SK-N-SH (cell line): ENCODE measurements at regions of chr19 and their contacts with region 1.

Region 1: DNA sequence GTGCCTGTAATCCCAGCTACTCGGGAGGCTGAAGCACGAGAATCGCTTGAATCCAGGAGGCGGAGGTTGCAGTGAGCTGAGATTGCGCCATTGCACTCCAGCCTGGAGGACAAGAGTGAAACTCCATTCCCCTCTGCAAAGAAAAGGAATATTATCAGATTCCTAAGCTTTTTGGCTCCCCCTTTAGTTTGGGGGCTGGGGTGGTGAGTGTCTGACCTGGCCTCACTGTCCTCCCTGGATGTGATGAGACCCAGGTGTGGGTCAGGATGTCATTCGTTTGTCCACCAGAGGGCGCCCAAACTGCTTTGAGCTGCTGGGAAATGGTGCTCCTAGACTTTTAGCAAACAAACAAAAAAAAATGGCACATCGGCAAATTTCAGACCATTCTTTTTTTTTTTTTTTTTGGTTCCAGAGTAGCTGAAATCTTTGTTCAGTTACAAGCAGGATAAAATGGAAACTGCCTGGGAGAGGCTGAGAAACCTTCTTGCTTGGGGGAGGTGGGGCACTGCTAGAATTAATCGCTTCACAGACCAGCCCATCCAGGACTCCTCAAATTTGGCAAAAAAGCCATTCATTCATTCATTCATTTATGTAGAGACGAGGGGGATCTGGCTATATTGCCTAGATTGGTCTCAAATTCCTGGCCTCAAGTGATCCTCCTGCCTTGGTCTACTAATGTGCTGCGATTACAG is 29.4 kb downstream of the SPC24 start:
- DNase-seq: peak; percentile 82
- H3K4me3 ChIP-seq: no peak overlapping the region; a peak in 1 of 4 replicates
- H3K27ac ChIP-seq: no peak overlapping the region
- H3K4me1 ChIP-seq: no peaks in the 10 kb centered on the region
- H3K27me3 ChIP-seq: no peaks in the 10 kb centered on the region
- CTCF ChIP-seq: peak; percentile 90
- EP300 ChIP-seq: no peak
- RAD21 ChIP-seq: peak; percentile 67

Region 2: GRCh38 chr19:10936661-10937084 is 189.5 kb before region 1 on chr19:
- CTCF ChIA-PET with region 1: interaction called, 20 read pairs
- POLR2A ChIA-PET with region 1: no interaction called
- DNase-seq: peak; percentile 83
- H3K4me3 ChIP-seq: peak overlapping the region in 1 of 2 experiments; percentile 40; a peak in 1 of 4 replicates
- H3K27ac ChIP-seq: peak overlapping the region in 1 of 2 experiments; percentile 51; a peak in 1 of 4 replicates
- H3K4me1 ChIP-seq: peaks cover 0 to 8% of the 10 kb centered on the region in 2 experiments; a peak in 2 of 4 replicates
- H3K27me3 ChIP-seq: no peaks in the 10 kb centered on the region
- CTCF ChIP-seq: peak; percentile 75
- EP300 ChIP-seq: no peak
- RAD21 ChIP-seq: peak; percentile 82

Region 3: DNA sequence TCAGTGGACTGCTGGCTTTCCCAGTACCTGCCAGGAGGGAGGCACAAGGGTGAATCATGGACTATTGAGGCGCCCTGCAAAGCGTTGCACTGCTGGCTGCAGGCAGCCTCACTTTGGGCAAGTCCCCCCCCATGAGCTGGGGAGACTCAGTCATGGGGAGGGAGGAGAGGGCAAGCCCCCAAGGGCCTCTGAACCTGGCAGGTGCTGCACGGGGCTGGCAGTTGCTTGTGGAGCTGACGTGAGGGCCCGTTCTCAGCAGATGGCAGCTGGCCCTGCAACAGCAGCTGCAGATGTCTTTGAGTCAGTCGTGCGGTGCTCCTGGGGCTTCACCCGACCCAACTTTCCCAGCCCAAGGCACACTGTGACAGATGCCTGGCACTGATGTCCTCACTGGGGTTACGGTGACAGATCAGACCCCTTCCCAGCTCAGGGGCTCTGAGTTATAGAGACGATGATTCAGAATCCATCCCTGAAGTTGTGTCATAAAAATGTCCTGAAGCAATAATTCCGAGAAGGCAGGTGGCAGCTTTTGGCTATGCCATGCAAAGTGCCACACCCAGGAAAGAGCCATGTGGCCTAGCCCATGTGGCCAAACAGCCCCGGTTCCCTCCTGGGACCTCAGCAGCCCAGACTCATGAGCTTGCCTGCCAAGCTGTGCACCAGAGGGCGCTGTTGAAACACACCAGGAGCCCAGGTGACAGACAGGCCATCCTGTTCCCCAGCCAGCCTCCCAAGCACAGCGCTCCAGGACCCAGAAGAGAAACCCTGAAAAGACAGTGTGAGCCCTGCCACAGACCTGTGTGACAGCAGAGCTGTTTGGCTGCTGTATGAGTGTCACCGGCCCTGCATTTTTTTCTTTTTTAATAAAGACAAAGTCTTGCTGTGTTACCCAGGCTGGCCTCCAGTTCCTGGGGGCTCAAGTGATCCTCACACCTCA is 90.4 kb before region 1 on chr19:
- CTCF ChIA-PET with region 1: interaction called, 20 read pairs
- POLR2A ChIA-PET with region 1: interaction called, 3 read pairs
- DNase-seq: peak; percentile 92
- H3K4me3 ChIP-seq: peak overlapping the region in 1 of 2 experiments; percentile 14; a peak in 1 of 4 replicates
- H3K27ac ChIP-seq: no peak overlapping the region
- H3K4me1 ChIP-seq: no peaks in the 10 kb centered on the region
- H3K27me3 ChIP-seq: no peaks in the 10 kb centered on the region
- CTCF ChIP-seq: peak; percentile 81
- EP300 ChIP-seq: no peak
- RAD21 ChIP-seq: peak; percentile 80

Region 4: GRCh38 chr19:11090054-11090900 is 35.9 kb before region 1 on chr19:
- CTCF ChIA-PET with region 1: interaction called, 47 read pairs
- POLR2A ChIA-PET with region 1: no interaction called
- DNase-seq: peak; percentile 96
- H3K4me3 ChIP-seq: peak overlapping the region; percentile 63 to 67
- H3K27ac ChIP-seq: peak overlapping the region; percentile 83 to 85
- H3K4me1 ChIP-seq: peaks cover 7 to 25% of the 10 kb centered on the region in 2 experiments
- H3K27me3 ChIP-seq: no peaks in the 10 kb centered on the region
- CTCF ChIP-seq: peak; percentile 24; the same call in 1 of the 2 replicates
- EP300 ChIP-seq: no peak
- RAD21 ChIP-seq: no peak

Region 5: DNA sequence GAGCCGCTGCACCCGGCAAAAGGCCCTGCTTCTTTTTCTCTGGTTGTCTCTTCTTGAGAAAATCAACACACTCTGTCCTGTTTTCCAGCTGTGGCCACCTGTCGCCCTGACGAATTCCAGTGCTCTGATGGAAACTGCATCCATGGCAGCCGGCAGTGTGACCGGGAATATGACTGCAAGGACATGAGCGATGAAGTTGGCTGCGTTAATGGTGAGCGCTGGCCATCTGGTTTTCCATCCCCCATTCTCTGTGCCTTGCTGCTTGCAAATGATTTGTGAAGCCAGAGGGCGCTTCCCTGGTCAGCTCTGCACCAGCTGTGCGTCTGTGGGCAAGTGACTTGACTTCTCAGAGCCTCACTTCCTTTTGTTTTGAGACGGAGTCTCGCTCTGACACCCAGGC is 19.7 kb before region 1 on chr19:
- CTCF ChIA-PET with region 1: interaction called, 18 read pairs
- POLR2A ChIA-PET with region 1: no interaction called
- DNase-seq: peak; percentile 87
- H3K4me3 ChIP-seq: no peak overlapping the region
- H3K27ac ChIP-seq: peak overlapping the region in 1 of 2 experiments; percentile 18; a peak in 1 of 4 replicates
- H3K4me1 ChIP-seq: peaks cover 0 to 10% of the 10 kb centered on the region in 2 experiments; a peak in 1 of 4 replicates
- H3K27me3 ChIP-seq: no peaks in the 10 kb centered on the region
- CTCF ChIP-seq: no peak
- EP300 ChIP-seq: peak in 1 of 2 experiments; percentile 81; a peak in 2 of 4 replicates
- RAD21 ChIP-seq: peak; percentile 50

Region 6: GRCh38 chr19:11145536-11145924 is 19.4 kb after region 1 on chr19:
- CTCF ChIA-PET with region 1: interaction called, 10 read pairs
- POLR2A ChIA-PET with region 1: no interaction called
- DNase-seq: no peak
- H3K4me3 ChIP-seq: no peak overlapping the region
- H3K27ac ChIP-seq: no peak overlapping the region
- H3K4me1 ChIP-seq: peaks cover 17 to 23% of the 10 kb centered on the region in 2 experiments; a peak in 3 of 4 replicates
- H3K27me3 ChIP-seq: no peaks in the 10 kb centered on the region
- CTCF ChIP-seq: no peak
- EP300 ChIP-seq: no peak
- RAD21 ChIP-seq: no peak

Region 7: DNA sequence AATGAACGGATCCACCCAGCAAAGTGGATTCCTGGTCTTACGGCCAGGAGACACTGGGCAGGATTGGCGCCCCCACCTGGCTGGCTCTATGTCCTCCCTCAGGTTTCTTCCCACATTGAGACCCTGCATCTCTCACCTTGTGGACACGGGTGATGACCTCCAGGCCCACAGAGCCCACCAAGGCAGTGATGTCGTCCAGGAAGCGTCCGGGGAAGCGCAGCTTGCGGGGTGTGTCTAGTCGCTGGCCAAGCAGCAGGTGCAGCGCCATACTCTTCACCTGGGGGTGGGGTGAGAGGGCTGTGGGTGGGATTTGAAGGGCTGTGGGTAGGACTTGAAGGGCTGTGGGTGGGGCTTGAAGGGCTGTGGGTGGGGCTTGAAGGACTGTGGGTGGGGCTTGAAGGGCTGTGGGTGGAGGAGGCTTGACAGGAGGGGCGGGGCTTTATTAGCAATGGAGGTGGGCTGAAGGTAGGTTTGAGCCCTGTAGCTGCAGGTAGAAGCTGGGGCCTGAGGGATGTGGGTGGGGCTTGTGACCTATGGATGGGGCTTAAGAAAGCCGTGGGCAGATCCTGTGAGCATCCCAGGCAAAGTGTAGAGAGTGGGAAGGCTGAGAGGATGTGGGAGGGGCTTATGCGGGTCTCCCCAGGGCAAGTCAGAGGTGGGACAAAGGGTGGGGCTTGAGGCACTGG is 101.2 kb after region 1 on chr19:
- CTCF ChIA-PET with region 1: interaction called, 12 read pairs
- POLR2A ChIA-PET with region 1: no interaction called
- DNase-seq: peak; percentile 73
- H3K4me3 ChIP-seq: no peak overlapping the region
- H3K27ac ChIP-seq: no peak overlapping the region
- H3K4me1 ChIP-seq: no peaks in the 10 kb centered on the region
- H3K27me3 ChIP-seq: no peaks in the 10 kb centered on the region
- CTCF ChIP-seq: peak; percentile 33; the same call in 1 of the 2 replicates
- EP300 ChIP-seq: no peak
- RAD21 ChIP-seq: no peak